Right cardiac atrium (tissue), 5 donors: ENCODE measurements at regions of chr1 and their contacts with region 1.

Region 1: GRCh38 chr1:84442256-84442655 is 36.8 kb upstream of the RPF1 start:
- DNase-seq: no peak
- ATAC-seq: peak; percentile 77 to 79
- H3K4me3 ChIP-seq: no peak overlapping the region
- H3K27ac ChIP-seq: no peak overlapping the region
- H3K4me1 ChIP-seq: no peaks in the 10 kb centered on the region
- H3K27me3 ChIP-seq: no peaks in the 10 kb centered on the region

Region 2: GRCh38 chr1:84253891-84254290 is 188.4 kb before region 1 on chr1:
- intact Hi-C with region 1: no loop called
- DNase-seq: peak; percentile 58 to 66 (median 65)
- ATAC-seq: peak; percentile 88 to 94
- H3K4me3 ChIP-seq: no peak overlapping the region
- H3K27ac ChIP-seq: no peak overlapping the region
- H3K4me1 ChIP-seq: peaks cover 4% of the 10 kb centered on the region
- H3K27me3 ChIP-seq: no peaks in the 10 kb centered on the region

Region 3: GRCh38 chr1:84603941-84604830 is 161.9 kb after region 1 on chr1:
- intact Hi-C with region 1: loop called in 2 of 4 experiments (anchors 5 to 10 kb)
- DNase-seq: peak; percentile 59 to 79 (median 73)
- ATAC-seq: peak; percentile 88
- H3K4me3 ChIP-seq: peak overlapping the region; percentile 46
- H3K27ac ChIP-seq: peak overlapping the region; percentile 79
- H3K4me1 ChIP-seq: peaks cover 2% of the 10 kb centered on the region
- H3K27me3 ChIP-seq: no peaks in the 10 kb centered on the region

Region 4: DNA sequence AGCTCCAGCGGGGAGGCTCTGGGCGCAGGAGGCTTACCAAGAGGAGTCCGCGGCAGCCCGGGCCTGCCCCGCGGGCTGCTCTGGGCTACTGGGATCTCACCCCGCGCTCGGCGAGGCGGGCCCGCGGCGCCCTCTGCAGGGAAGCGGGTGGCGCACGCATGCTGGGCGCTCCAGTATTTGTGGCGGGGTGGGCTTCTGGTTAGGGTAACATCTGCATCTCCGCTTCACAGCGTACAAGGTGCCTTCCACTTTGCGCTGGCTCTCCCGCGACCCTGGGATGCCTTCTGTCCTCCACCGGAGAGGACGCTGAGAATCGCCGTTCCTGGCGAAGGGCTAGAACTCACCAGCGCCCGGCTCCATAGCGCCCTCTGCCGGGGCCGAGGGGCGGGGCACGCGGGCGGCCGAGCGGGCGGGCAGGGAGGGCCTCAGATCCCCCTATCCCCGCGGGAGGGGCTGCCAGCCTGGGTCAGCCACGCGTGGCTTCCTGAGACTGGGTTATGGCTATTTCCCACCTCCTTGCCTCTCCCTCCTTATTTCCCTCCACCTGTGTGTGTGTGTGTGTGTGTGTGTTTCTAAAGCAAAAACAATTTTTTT is 178.6 kb after region 1 on chr1:
- intact Hi-C with region 1: loop called in 1 of 4 experiments (anchors 5 kb)
- DNase-seq: peak; percentile 79 to 91 (median 89)
- ATAC-seq: peak; percentile 95 to 96
- H3K4me3 ChIP-seq: peak overlapping the region; percentile 48
- H3K27ac ChIP-seq: peak overlapping the region; percentile 26
- H3K4me1 ChIP-seq: no peaks in the 10 kb centered on the region
- H3K27me3 ChIP-seq: no peaks in the 10 kb centered on the region

Region 5: GRCh38 chr1:84758968-84759491 is 316.8 kb after region 1 on chr1:
- intact Hi-C with region 1: loop called in 1 of 4 experiments (anchors 5 kb)
- DNase-seq: peak in 1 of 3 donors; percentile 22
- ATAC-seq: peak; percentile 74 to 75
- H3K4me3 ChIP-seq: peak overlapping the region; percentile 31
- H3K27ac ChIP-seq: no peak overlapping the region
- H3K4me1 ChIP-seq: no peaks in the 10 kb centered on the region
- H3K27me3 ChIP-seq: no peaks in the 10 kb centered on the region